ENCODE measurements at regions of chr15 and their contacts with region 1.

Region 1: GRCh38 chr15:70466895-70467529 is 296.3 kb downstream of the UACA start:
- DNase-seq: peak; percentile 71
- ATAC-seq: peak; percentile 89
- H3K4me3 Mint-ChIP-seq: no peak overlapping the region
- H3K27ac Mint-ChIP-seq: no peak overlapping the region
- H3K4me1 Mint-ChIP-seq: peaks cover 2% of the 10 kb centered on the region
- H3K27me3 Mint-ChIP-seq: peaks cover 20% of the 10 kb centered on the region

Region 2: GRCh38 chr15:70451821-70452653 is 15.0 kb before region 1 on chr15:
- CTCF ChIA-PET with region 1: interaction called, 10 read pairs
- POLR2A ChIA-PET with region 1: no interaction called
- intact Hi-C with region 1: no loop called
- DNase-seq: peak; percentile 60
- ATAC-seq: peak; percentile 54
- H3K4me3 Mint-ChIP-seq: no peak overlapping the region
- H3K27ac Mint-ChIP-seq: no peak overlapping the region
- H3K4me1 Mint-ChIP-seq: peaks cover 32% of the 10 kb centered on the region
- H3K27me3 Mint-ChIP-seq: peaks cover 9% of the 10 kb centered on the region

Region 3: DNA sequence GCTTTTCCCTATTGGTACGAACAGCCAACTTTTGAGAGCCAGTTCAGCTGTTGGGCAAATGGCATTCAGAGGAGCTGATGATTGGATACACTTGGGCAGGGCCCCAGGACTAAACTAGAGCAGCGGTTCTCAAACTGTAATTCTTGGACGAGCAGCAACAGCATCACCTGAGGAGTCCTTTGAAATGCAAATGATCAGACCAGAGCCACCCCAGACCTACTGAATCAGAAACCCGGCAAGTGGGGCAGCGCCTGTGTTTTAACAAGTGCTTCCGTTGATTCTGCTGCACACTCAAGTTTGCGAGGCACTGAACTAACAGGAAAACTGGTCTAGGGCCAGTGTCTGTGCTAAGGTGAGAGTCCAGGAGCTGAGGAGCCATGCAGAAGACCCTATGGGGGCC is 56.6 kb after region 1 on chr15:
- CTCF ChIA-PET with region 1: no interaction called
- POLR2A ChIA-PET with region 1: no interaction called
- intact Hi-C with region 1: no loop called
- DNase-seq: peak; percentile 2
- ATAC-seq: no peak
- H3K4me3 Mint-ChIP-seq: no peak overlapping the region
- H3K27ac Mint-ChIP-seq: no peak overlapping the region
- H3K4me1 Mint-ChIP-seq: peaks cover 37% of the 10 kb centered on the region
- H3K27me3 Mint-ChIP-seq: peaks cover 4% of the 10 kb centered on the region

Region 4: GRCh38 chr15:70584838-70585706 is 118.1 kb after region 1 on chr15:
- CTCF ChIA-PET with region 1: no interaction called
- POLR2A ChIA-PET with region 1: no interaction called
- intact Hi-C with region 1: no loop called
- DNase-seq: peak; percentile 75
- ATAC-seq: peak; percentile 86
- H3K4me3 Mint-ChIP-seq: peak overlapping the region; percentile 41
- H3K27ac Mint-ChIP-seq: no peak overlapping the region
- H3K4me1 Mint-ChIP-seq: peaks cover 20% of the 10 kb centered on the region
- H3K27me3 Mint-ChIP-seq: peaks cover 13% of the 10 kb centered on the region

Measured in activated CD4-positive, alpha-beta T cell treated with anti-CD3 and anti-CD28 coated beads for 36 hours (primary cell).